ENCODE measurements at regions of chr5 and their contacts with region 1.

Region 1: DNA sequence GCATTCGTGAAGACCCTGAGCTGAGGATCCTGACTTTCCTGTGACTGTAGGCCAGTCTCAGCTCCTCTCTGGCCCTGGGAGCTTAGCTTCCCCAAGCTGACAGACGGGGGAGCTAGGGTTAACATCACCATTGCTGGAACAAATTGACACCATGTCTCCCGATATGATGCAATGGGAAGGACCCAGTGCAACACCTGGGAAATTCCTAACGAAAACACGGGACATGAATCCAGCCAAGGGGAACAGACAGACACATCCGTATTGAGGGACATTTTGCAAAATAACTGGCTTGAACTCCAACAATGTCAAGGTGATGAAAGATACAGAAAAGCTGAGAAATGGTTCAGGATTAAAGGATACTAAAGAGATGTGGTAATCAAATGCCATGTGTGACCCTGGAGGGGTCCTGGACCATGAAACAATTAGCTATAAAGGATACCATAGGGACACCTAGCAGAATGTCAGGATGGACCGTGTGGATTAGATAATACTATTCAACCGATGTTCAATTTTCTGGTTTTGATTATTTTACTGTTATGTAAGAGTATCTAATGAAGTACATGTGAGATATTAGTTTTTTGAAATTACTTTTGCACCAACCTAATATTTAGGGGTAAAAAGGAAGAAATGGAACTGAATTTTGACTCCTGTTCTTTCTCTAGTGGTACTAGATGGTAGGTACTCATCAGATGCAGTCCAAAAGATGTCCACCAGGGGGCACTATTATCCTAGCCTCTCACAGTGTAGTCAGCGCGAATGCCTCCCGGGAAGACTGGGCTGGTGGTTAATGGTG is 52.7 kb downstream of the NDST1 start:
- DNase-seq: peak; percentile 62 to 82
- H3K4me3 ChIP-seq: no peak overlapping the region
- H3K27ac ChIP-seq: no peak overlapping the region
- H3K4me1 ChIP-seq: 0 out of 2 replicates have a peak, but pooled peaks cover 7% of the 10 kb centered on the region
- H3K27me3 ChIP-seq: no peaks in the 10 kb centered on the region
- CTCF ChIP-seq: peak; percentile 90

Region 2: DNA sequence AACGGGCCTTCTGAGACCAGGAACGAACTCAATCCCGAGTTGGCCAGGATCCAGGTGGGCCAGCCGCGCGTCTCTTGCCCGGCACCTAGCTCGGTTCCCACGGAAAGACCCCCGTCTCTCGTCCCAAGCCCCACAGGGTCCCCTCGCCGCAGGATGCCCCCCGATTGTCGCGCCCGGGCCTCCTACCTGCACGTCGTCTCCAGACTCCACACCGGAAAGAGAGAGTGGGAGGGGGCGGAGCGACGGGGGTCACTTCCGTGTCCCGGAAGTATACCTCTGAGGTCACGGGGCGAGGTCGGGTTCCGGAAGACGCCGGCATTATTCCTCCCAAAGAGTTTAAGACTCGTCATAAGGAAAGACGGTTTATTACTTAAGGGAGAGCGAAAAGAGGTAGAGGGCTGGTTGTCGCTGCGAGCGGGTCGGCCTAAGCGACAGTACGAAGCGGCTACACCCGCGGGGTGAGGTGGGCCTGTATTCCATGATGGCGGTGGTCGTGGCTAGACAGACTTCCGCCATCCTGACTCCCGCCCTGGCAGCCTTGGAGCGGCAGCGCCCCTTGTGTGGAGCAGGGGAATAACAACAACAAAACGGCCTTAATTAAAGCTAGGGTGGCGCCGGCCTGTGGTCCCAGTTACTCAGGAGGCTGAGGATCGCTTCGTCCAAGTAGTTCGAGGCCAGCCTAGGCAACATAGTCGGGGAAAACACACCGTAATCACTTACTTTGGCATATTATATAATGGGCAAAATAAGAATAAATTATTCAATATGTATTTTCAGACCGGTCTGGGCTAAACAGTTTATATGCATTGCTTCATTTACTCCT is 110.9 kb before region 1 on chr5 and contains the start of gene RPS14:
- CTCF ChIA-PET with region 1: no interaction called
- POLR2A ChIA-PET with region 1: no interaction called
- intact Hi-C with region 1: loop called (anchors 1 kb)
- DNase-seq: peak; percentile 82 to 94
- H3K4me3 ChIP-seq: peak within 1 kb of the TSS; percentile 93
- H3K27ac ChIP-seq: peak within 1 kb of the TSS; percentile 86
- H3K4me1 ChIP-seq: peaks cover 12% of the 10 kb centered on the region
- H3K27me3 ChIP-seq: no peaks in the 10 kb centered on the region
- CTCF ChIP-seq: peak; percentile 98
- total RNA-seq, gene RPS14: 2,907 and 3,838 TPM in 2 replicates

Region 3: GRCh38 chr5:150656191-150657132 is 95.9 kb after region 1 on chr5:
- CTCF ChIA-PET with region 1: no interaction called
- POLR2A ChIA-PET with region 1: no interaction called
- intact Hi-C with region 1: loop called (anchors 1 kb)
- DNase-seq: peak in 1 of 2 experiments; percentile 80
- H3K4me3 ChIP-seq: peak overlapping the region; percentile 58; the same call in 1 of the 2 replicates
- H3K27ac ChIP-seq: no peak overlapping the region
- H3K4me1 ChIP-seq: 0 out of 2 replicates have a peak, but pooled peaks cover 3% of the 10 kb centered on the region
- H3K27me3 ChIP-seq: peaks cover 4% of the 10 kb centered on the region; the same call in 1 of the 2 replicates
- CTCF ChIP-seq: peak; percentile 65

Region 4: GRCh38 chr5:150710165-150710564 is 149.6 kb after region 1 on chr5:
- CTCF ChIA-PET with region 1: no interaction called
- POLR2A ChIA-PET with region 1: no interaction called
- intact Hi-C with region 1: loop called (anchors 1 kb)
- DNase-seq: no peak
- H3K4me3 ChIP-seq: no peak overlapping the region
- H3K27ac ChIP-seq: no peak overlapping the region
- H3K4me1 ChIP-seq: no peaks in the 10 kb centered on the region
- H3K27me3 ChIP-seq: no peaks in the 10 kb centered on the region
- CTCF ChIP-seq: peak; percentile 51

Region 5: GRCh38 chr5:150846654-150847333 is 286.2 kb after region 1 on chr5:
- CTCF ChIA-PET with region 1: no interaction called
- POLR2A ChIA-PET with region 1: no interaction called
- intact Hi-C with region 1: loop called (anchors 1 kb)
- DNase-seq: peak; percentile 38 to 63
- H3K4me3 ChIP-seq: no peak overlapping the region
- H3K27ac ChIP-seq: no peak overlapping the region
- H3K4me1 ChIP-seq: no peaks in the 10 kb centered on the region
- H3K27me3 ChIP-seq: peaks cover 2% of the 10 kb centered on the region; the same call in 1 of the 2 replicates
- CTCF ChIP-seq: peak; percentile 79

Region 6: DNA sequence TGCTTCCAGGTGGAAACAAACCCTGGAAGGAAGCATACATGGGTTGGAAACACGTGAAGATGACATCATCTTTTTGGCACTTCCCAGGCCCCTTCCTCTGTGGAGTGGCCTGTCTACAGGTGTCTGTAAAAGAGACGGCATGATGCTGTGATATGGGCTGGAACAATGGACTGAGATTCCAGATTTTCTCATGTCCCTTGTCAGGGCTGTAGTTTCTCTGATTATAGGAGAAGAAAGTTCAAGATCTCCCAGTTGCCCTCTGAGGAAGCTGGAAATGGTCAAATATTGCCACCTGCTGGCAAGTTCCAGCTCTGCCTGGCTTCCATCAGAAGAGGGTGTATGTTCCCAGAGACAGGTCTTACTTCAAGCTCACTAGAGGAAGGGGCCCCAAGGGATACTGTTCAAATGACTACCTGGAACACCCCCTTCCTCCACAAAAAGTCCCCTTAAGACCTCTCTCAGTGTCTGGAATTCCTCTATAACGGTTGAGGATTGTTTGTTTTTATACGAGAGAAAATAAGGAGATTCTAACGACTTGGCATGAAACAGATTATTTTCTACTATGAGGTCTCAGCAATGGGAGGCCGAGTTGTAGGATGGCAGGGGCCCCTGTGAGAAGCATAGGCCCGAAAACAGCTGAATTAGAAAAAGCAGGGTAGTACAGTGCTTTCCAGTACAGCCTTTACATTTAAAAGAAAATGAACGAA is 604.2 kb after region 1 on chr5:
- CTCF ChIA-PET with region 1: no interaction called
- POLR2A ChIA-PET with region 1: no interaction called
- intact Hi-C with region 1: loop called (anchors 2 kb)
- DNase-seq: peak; percentile 59 to 81
- H3K4me3 ChIP-seq: no peak overlapping the region
- H3K27ac ChIP-seq: no peak overlapping the region
- H3K4me1 ChIP-seq: no peaks in the 10 kb centered on the region
- H3K27me3 ChIP-seq: peaks cover 6% of the 10 kb centered on the region; the same call in 1 of the 2 replicates
- CTCF ChIP-seq: peak; percentile 90

Measured in PC-9 (cell line).